Endothelial cell of umbilical vein (primary cell): ENCODE measurements at regions of chr9 and their contacts with region 1.

Region 1: DNA sequence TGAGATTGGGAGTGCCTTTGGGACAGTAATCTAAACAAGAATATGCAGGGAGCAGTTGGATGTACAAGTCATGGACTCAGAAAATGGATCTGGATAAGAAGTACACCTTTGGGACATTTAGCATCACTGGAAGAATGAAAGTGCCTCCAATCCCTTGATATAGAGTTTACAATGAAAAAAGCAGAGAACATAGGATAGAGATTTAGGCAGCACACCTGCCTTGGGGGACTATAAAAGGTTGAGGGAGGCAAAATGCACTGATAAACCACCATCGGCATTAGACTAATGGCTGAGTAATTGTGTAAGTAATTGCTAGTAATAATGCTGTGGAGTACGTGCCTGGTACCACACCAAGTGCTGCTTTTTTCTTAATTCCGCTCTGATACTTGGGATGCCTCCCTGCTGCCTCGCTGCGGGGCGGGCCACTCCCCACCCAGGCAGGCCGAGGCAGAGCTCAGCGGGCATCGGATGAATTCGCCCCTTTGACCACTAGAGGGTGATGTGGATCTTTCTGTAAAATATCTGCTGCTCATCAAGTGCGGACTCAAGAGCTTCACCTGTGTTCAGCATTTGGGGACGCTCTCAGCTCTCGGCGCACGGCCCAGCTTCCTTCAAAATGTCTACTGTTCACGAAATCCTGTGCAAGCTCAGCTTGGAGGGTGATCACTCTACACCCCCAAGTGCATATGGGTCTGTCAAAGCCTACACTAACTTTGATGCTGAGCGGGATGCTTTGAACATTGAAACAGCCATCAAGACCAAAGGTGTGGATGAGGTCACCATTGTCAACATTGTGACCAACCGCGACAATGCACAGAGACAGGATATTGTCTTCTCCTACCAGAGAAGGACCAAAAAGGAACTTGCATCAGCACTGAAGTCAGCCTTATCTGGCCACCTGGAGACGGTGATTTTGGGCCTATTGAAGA is 99.9 kb downstream of the ANKRD18B start:
- DNase-seq: peak; percentile 77
- H3K4me3 ChIP-seq: no peak overlapping the region
- H3K27ac ChIP-seq: no peak overlapping the region
- H3K4me1 ChIP-seq: peaks cover 2% of the 10 kb centered on the region
- H3K27me3 ChIP-seq: peaks cover under 1 to 3% of the 10 kb centered on the region in 2 experiments
- CTCF ChIP-seq: peak; percentile 73 to 84
- POLR2A ChIP-seq: no peak

Region 2: DNA sequence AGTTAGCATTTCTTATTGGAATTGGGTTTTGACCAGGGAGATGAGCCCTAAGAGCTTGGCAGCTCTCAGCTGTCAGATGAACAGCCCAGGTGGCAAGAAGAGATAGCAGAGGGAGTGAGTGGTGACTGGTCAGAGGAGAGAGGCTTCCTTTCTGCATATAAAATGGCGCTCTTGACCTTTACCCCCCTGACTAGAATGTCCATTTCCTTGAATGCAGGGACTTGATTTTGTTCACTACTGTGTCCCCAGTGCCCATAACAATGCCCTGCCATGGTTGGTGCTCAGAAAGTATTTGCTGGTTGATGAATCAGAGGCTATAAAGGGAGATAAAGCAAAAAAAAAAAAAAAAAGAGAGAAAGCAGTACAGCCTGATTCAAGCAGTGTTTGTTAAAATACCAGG is 351.9 kb before region 1 on chr9:
- CTCF ChIA-PET with region 1: no interaction called
- POLR2A ChIA-PET with region 1: no interaction called
- dilution Hi-C with region 1: no loop called
- intact Hi-C with region 1: no loop called
- DNase-seq: no peak
- H3K4me3 ChIP-seq: no peak overlapping the region
- H3K27ac ChIP-seq: no peak overlapping the region
- H3K4me1 ChIP-seq: no peaks in the 10 kb centered on the region
- H3K27me3 ChIP-seq: no peaks in the 10 kb centered on the region
- CTCF ChIP-seq: no peak
- POLR2A ChIP-seq: no peak

Region 3: GRCh38 chr9:33611358-33611757 is 12.6 kb before region 1 on chr9:
- CTCF ChIA-PET with region 1: interaction called, 10 read pairs
- POLR2A ChIA-PET with region 1: no interaction called
- dilution Hi-C with region 1: no loop called
- intact Hi-C with region 1: no loop called
- DNase-seq: no peak
- H3K4me3 ChIP-seq: no peak overlapping the region
- H3K27ac ChIP-seq: no peak overlapping the region
- H3K4me1 ChIP-seq: no peaks in the 10 kb centered on the region
- H3K27me3 ChIP-seq: peaks cover 19 to 20% of the 10 kb centered on the region in 2 experiments
- CTCF ChIP-seq: no peak
- POLR2A ChIP-seq: no peak

Region 4: GRCh38 chr9:33649463-33649862 is 25.5 kb after region 1 on chr9:
- CTCF ChIA-PET with region 1: interaction called, 13 read pairs
- POLR2A ChIA-PET with region 1: no interaction called
- dilution Hi-C with region 1: no loop called
- intact Hi-C with region 1: no loop called
- DNase-seq: no peak
- H3K4me3 ChIP-seq: no peak overlapping the region
- H3K27ac ChIP-seq: no peak overlapping the region
- H3K4me1 ChIP-seq: no peaks in the 10 kb centered on the region
- H3K27me3 ChIP-seq: peaks cover 29 to 44% of the 10 kb centered on the region in 2 experiments
- CTCF ChIP-seq: no peak
- POLR2A ChIP-seq: no peak

Region 5: GRCh38 chr9:33698267-33698666 is 74.3 kb after region 1 on chr9:
- CTCF ChIA-PET with region 1: interaction called, 19 read pairs
- POLR2A ChIA-PET with region 1: no interaction called
- dilution Hi-C with region 1: no loop called
- intact Hi-C with region 1: no loop called
- DNase-seq: no peak
- H3K4me3 ChIP-seq: no peak overlapping the region
- H3K27ac ChIP-seq: no peak overlapping the region
- H3K4me1 ChIP-seq: no peaks in the 10 kb centered on the region
- H3K27me3 ChIP-seq: peaks cover 10 to 24% of the 10 kb centered on the region in 2 experiments
- CTCF ChIP-seq: no peak
- POLR2A ChIP-seq: no peak

Region 6: GRCh38 chr9:33721674-33722358 is 97.9 kb after region 1 on chr9:
- CTCF ChIA-PET with region 1: interaction called, 561 read pairs
- POLR2A ChIA-PET with region 1: no interaction called
- dilution Hi-C with region 1: no loop called
- intact Hi-C with region 1: loop called (anchors 1 kb)
- DNase-seq: peak; percentile 84
- H3K4me3 ChIP-seq: no peak overlapping the region
- H3K27ac ChIP-seq: no peak overlapping the region
- H3K4me1 ChIP-seq: peaks cover 13% of the 10 kb centered on the region
- H3K27me3 ChIP-seq: peaks cover 0 to 4% of the 10 kb centered on the region in 2 experiments
- CTCF ChIP-seq: peak; percentile 100
- POLR2A ChIP-seq: no peak

Region 7: GRCh38 chr9:33737811-33738606 is 114.1 kb after region 1 on chr9:
- CTCF ChIA-PET with region 1: interaction called, 26 read pairs
- POLR2A ChIA-PET with region 1: no interaction called
- dilution Hi-C with region 1: no loop called
- intact Hi-C with region 1: no loop called
- DNase-seq: peak; percentile 62
- H3K4me3 ChIP-seq: no peak overlapping the region
- H3K27ac ChIP-seq: no peak overlapping the region
- H3K4me1 ChIP-seq: no peaks in the 10 kb centered on the region
- H3K27me3 ChIP-seq: no peaks in the 10 kb centered on the region
- CTCF ChIP-seq: peak; percentile 68 to 74
- POLR2A ChIP-seq: no peak